ENCODE measurements at regions of chr7 and their contacts with region 1.

Region 1: GRCh38 chr7:148698397-148699023 is at the start of gene CUL1:
- DNase-seq: peak; percentile 93
- H3K4me3 ChIP-seq: peak within 1 kb of the TSS; percentile 60 to 95 (median 80)
- H3K27ac ChIP-seq: peak within 1 kb of the TSS; percentile 96 to 98 (median 96)
- H3K4me1 ChIP-seq: peaks cover 0 to 42% (median 34%) of the 10 kb centered on the region in 4 donors
- H3K27me3 ChIP-seq: no peaks in the 10 kb centered on the region
- CTCF ChIP-seq: no peak
- EP300 ChIP-seq: no peak
- POLR2A ChIP-seq: peak; percentile 39 to 80
- total RNA-seq, gene CUL1: 53.9 to 72.8 (median 65.3) TPM

Region 2: GRCh38 chr7:148535217-148535616 is 163.3 kb before region 1 on chr7:
- intact Hi-C with region 1: no loop called
- DNase-seq: peak; percentile 66
- H3K4me3 ChIP-seq: peak overlapping the region in 3 of 4 donors; percentile 3 to 14 (median 11)
- H3K27ac ChIP-seq: peak overlapping the region in 2 of 4 donors; percentile 47 to 62
- H3K4me1 ChIP-seq: peaks cover 0 to 13% (median under 1%) of the 10 kb centered on the region in 4 donors
- H3K27me3 ChIP-seq: no peaks in the 10 kb centered on the region
- CTCF ChIP-seq: no peak
- EP300 ChIP-seq: peak in 2 of 4 donors; percentile 2 to 63
- POLR2A ChIP-seq: no peak

Region 3: DNA sequence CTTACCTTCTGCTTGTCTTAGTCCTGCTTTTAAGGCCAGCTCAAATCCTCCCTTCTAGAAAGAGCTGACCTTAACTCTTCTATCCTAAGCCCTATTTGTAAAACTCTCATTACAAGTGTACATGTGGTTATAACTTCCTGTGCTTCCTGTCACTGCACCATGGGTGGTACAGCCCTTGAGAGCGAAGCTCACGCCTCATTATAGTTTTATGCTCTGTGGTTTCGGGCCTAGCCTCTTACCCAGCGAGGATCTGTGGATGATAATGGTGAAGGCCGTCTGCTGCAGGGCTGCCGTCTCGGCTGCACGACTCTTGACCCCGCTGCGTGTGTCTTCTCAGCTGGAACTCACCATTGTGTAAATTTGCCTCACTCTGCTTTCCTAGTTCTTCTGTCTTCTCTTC is 74.8 kb after region 1 on chr7:
- intact Hi-C with region 1: loop called (anchors 5 kb)
- DNase-seq: no peak
- H3K4me3 ChIP-seq: no peak overlapping the region
- H3K27ac ChIP-seq: no peak overlapping the region
- H3K4me1 ChIP-seq: no peaks in the 10 kb centered on the region
- H3K27me3 ChIP-seq: no peaks in the 10 kb centered on the region
- CTCF ChIP-seq: no peak
- EP300 ChIP-seq: no peak
- POLR2A ChIP-seq: no peak

Region 4: DNA sequence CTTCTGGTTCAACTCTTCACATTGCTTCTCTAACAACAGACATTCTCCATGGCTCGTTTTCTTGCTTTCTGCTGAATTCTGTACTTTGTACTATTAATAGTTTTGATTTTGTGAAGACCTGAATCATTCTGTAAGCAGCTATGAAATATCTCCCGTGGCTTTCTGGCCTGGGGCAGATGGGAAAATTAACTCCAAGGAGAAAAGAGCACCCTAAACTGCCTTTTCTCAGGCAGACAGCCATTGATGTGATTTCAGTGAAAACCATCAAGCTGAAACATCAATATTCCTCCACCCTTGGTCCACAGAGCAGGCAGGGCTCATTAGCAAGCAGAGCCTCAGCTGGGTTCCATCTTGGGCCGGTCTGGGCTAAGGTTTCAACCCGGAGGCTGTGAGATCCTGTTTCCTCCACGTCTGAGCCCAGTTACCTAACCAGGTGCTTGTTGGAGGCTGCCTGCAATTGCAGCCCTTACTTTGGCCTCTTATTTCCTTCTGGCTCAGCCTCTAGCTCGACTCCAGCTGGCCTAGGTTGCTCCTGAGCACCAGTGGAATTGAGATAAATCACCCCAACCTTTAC is 206.7 kb after region 1 on chr7:
- intact Hi-C with region 1: no loop called
- DNase-seq: no peak
- H3K4me3 ChIP-seq: no peak overlapping the region
- H3K27ac ChIP-seq: no peak overlapping the region
- H3K4me1 ChIP-seq: no peaks in the 10 kb centered on the region
- H3K27me3 ChIP-seq: peaks cover 0 to 18% (median 0%) of the 10 kb centered on the region in 3 donors
- CTCF ChIP-seq: no peak
- EP300 ChIP-seq: no peak
- POLR2A ChIP-seq: no peak

Region 5: GRCh38 chr7:148940702-148941597 is 242.4 kb after region 1 on chr7:
- intact Hi-C with region 1: loop called (anchors 5 kb)
- DNase-seq: peak; percentile 90
- H3K4me3 ChIP-seq: peak overlapping the region; percentile 57 to 84 (median 73)
- H3K27ac ChIP-seq: peak overlapping the region; percentile 82 to 91 (median 86)
- H3K4me1 ChIP-seq: peaks cover 0 to 20% (median 7%) of the 10 kb centered on the region in 4 donors
- H3K27me3 ChIP-seq: no peaks in the 10 kb centered on the region
- CTCF ChIP-seq: no peak
- EP300 ChIP-seq: peak in 1 of 4 donors; percentile 4
- POLR2A ChIP-seq: no peak

Region 6: GRCh38 chr7:148962823-148963582 is 264.5 kb after region 1 on chr7:
- intact Hi-C with region 1: loop called (anchors 5 kb)
- DNase-seq: peak; percentile 82
- H3K4me3 ChIP-seq: peak overlapping the region; percentile 39 to 60 (median 53)
- H3K27ac ChIP-seq: peak overlapping the region; percentile 60 to 75 (median 71)
- H3K4me1 ChIP-seq: peaks cover 0 to 18% (median 14%) of the 10 kb centered on the region in 4 donors
- H3K27me3 ChIP-seq: no peaks in the 10 kb centered on the region
- CTCF ChIP-seq: peak in 3 of 4 experiments; percentile 34 to 71 (median 48)
- EP300 ChIP-seq: no peak
- POLR2A ChIP-seq: no peak

Region 7: GRCh38 chr7:148987010-148987750 is 288.7 kb after region 1 on chr7:
- intact Hi-C with region 1: loop called (anchors 5 kb)
- DNase-seq: peak; percentile 94
- H3K4me3 ChIP-seq: peak overlapping the region; percentile 59 to 65 (median 64)
- H3K27ac ChIP-seq: peak overlapping the region; percentile 82 to 89 (median 84)
- H3K4me1 ChIP-seq: peaks cover 0 to 36% (median 28%) of the 10 kb centered on the region in 4 donors
- H3K27me3 ChIP-seq: no peaks in the 10 kb centered on the region
- CTCF ChIP-seq: no peak
- EP300 ChIP-seq: no peak
- POLR2A ChIP-seq: no peak

Region 8: DNA sequence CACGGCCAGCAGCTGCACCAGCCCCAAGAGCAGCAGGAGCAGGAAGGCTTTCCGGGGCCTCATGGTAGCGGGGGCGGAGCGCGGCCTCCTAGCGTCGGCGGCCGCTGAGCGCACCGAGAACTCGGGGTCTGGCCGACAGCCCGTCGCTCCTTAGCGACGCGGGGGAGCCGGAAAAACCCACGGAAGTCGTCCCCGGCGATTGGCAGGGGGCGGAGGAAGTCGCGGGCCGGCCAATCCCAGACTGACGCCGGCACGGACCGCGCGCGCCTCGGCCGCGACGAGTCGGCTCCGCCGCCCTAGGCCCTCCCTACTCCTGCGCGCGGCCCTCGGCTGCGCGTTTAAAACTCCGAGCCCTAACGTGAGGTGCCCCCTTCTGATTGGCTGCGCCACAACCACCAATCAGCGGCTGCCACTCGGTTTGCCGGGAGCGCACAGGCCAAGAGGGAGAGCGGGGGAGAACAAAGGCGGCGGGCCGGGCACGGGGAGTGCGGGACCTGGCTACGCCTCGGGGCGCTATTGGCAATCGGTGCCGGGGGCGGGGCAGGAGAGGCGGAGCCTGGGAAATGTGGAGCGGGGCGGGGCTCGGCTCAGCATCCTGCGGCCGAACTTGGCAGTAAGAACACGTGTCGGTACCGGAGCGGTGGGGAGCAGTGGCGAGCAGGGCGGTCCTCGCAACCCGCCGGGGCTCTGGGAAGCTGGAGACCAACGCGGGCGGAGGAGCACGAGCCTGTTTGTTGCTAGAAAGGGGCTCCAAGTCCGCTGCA is 330.0 kb after region 1 on chr7 and contains the start of gene PDIA4:
- intact Hi-C with region 1: loop called (anchors 2 kb)
- DNase-seq: peak; percentile 100
- H3K4me3 ChIP-seq: peak within 1 kb of the TSS; percentile 59 to 90 (median 82)
- H3K27ac ChIP-seq: peak within 1 kb of the TSS; percentile 92 to 96 (median 95)
- H3K4me1 ChIP-seq: peaks cover 0 to 28% (median 23%) of the 10 kb centered on the region in 4 donors
- H3K27me3 ChIP-seq: no peaks in the 10 kb centered on the region
- CTCF ChIP-seq: peak in 2 of 4 experiments; percentile 26 to 29
- EP300 ChIP-seq: no peak
- POLR2A ChIP-seq: peak; percentile 42 to 60
- total RNA-seq, gene PDIA4: 34.3 to 47.4 (median 39.7) TPM

Region 9: GRCh38 chr7:149125863-149126661 is 427.6 kb after region 1 on chr7 and contains the start of gene ZNF425:
- intact Hi-C with region 1: loop called (anchors 5 kb)
- DNase-seq: peak; percentile 95
- H3K4me3 ChIP-seq: peak within 1 kb of the TSS; percentile 87 to 99 (median 90)
- H3K27ac ChIP-seq: peak within 1 kb of the TSS; percentile 96 to 99 (median 97)
- H3K4me1 ChIP-seq: peaks cover 0 to 17% (median 13%) of the 10 kb centered on the region in 4 donors
- H3K27me3 ChIP-seq: no peaks in the 10 kb centered on the region
- CTCF ChIP-seq: peak; percentile 90 to 98 (median 96)
- EP300 ChIP-seq: no peak
- POLR2A ChIP-seq: peak; percentile 87 to 90
- total RNA-seq, gene ZNF425: 2.9 to 4.9 (median 3.6) TPM